Activated CD4-positive, alpha-beta T cell treated with anti-CD3 and anti-CD28 coated beads, Interleukin-2, amount 10 ng/mL, durations not matched to agents 24 days and 14 days (primary cell): ENCODE measurements at regions of chr18 and their contacts with region 1.

Region 1: DNA sequence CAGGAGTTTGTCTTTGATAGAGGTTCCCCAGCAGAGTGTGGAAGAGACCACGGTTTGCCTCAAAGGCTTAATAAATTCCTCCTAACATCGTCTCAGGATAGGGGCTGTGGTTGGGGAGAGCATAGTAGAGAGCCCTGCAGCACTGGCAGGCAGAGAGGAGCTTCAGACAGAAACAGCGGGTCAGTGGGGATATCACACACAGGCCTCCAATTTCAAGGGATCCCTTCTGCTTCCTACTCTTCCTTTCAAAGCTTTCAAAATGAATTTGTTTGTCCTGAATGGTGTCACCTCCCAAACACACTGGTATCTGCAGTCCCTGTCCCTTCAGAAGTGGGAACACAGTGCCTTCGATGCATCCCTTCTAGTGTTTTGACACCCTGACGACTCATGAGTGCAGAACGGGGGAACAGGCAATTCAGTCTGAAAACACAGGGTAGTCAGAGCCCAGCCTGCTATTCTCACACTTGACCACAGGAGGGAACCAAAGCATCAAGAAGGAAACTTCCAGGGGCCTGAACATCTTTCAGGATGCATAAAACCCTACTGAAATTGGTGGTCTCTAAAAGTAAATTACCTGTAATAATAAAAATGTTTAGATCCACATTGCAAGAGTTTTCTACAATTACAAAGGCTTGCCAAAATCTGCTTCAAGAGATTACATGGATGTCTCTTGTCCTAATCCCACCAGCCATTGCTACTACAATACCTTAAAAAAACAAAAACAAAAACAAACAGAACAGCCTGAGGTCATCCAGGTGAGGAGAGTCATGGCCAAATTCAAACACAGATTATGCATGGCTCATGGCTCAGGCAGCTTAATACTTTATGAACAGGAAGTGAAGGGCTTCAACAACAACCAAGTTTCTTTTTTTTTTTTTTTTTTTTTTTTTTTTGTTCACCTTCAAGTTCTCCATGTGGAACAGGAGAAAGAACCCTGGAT is 49.8 kb downstream of the SLC14A2 start:
- DNase-seq: peak; percentile 90
- H3K4me3 Mint-ChIP-seq: peak overlapping the region; percentile 7
- H3K27ac Mint-ChIP-seq: no peak overlapping the region
- H3K4me1 Mint-ChIP-seq: peaks cover 46% of the 10 kb centered on the region
- H3K27me3 Mint-ChIP-seq: peaks cover 23% of the 10 kb centered on the region

Region 2: DNA sequence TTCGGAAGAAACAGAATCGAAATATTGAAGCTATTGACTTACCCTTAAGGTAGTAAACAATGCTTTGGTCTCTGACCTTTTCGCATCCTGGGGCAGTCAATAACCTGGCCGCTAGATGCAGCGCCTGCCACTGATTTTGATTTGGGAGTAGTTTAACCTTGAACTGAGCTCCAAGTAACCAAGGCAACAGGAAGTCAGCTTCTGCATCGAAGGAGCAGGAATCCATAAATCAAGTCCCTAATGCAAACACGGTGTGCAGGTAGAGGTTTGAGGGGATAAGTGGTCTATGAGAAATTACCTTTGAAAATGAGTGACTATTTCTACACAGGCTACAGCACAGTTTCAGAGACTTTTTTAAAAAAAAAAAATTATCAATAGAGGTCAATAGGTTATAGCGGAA is 630.9 kb before region 1 on chr18:
- intact Hi-C with region 1: no loop called
- DNase-seq: no peak
- H3K4me3 Mint-ChIP-seq: no peak overlapping the region
- H3K27ac Mint-ChIP-seq: no peak overlapping the region
- H3K4me1 Mint-ChIP-seq: no peaks in the 10 kb centered on the region
- H3K27me3 Mint-ChIP-seq: no peaks in the 10 kb centered on the region

Region 3: GRCh38 chr18:45571714-45572113 is 93.4 kb before region 1 on chr18:
- intact Hi-C with region 1: no loop called
- DNase-seq: no peak
- H3K4me3 Mint-ChIP-seq: no peak overlapping the region
- H3K27ac Mint-ChIP-seq: no peak overlapping the region
- H3K4me1 Mint-ChIP-seq: no peaks in the 10 kb centered on the region
- H3K27me3 Mint-ChIP-seq: no peaks in the 10 kb centered on the region

Region 4: GRCh38 chr18:45652303-45653080 is 12.6 kb before region 1 on chr18:
- intact Hi-C with region 1: no loop called
- DNase-seq: no peak
- H3K4me3 Mint-ChIP-seq: no peak overlapping the region
- H3K27ac Mint-ChIP-seq: no peak overlapping the region
- H3K4me1 Mint-ChIP-seq: peaks cover 3% of the 10 kb centered on the region
- H3K27me3 Mint-ChIP-seq: peaks cover 19% of the 10 kb centered on the region

Region 5: GRCh38 chr18:45722899-45723298 is 57.8 kb after region 1 on chr18:
- intact Hi-C with region 1: loop called (anchors 2 kb)
- DNase-seq: peak; percentile 91
- H3K4me3 Mint-ChIP-seq: no peak overlapping the region
- H3K27ac Mint-ChIP-seq: no peak overlapping the region
- H3K4me1 Mint-ChIP-seq: no peaks in the 10 kb centered on the region
- H3K27me3 Mint-ChIP-seq: peaks cover 31% of the 10 kb centered on the region

Region 6: DNA sequence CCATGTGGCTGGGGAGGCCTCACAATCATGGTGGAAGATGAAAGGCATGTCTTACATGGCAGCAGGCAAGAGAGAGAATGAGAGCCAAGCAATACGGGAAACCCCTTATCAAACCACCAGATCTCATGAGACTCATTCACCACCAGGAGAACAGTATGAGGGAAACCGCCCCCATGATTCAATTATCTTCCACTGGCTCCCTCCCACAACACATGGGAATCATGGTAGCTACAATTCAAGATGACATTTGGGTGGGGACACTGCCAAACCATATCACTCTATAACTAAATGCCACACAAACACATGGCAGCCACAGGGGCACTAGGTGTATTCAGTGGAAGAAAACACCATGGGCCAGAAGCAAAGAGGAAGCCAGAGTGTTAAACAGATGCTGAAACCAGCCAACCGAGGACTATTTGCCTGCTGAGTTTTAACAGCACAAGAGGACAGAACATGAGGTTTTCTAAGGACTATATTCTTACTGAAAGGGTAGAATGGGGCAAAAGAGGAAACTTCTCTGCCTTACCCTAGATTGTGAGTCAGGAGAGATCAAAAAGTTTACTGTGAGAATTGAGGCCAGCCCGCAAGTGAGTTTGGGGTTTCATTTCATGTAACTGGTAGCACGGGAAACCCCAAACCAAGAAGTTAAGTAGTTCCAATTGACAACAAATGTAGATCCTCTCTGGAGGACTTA is 209.5 kb after region 1 on chr18:
- intact Hi-C with region 1: loop called (anchors 1 kb)
- DNase-seq: peak; percentile 89
- H3K4me3 Mint-ChIP-seq: peak overlapping the region; percentile 58
- H3K27ac Mint-ChIP-seq: peak overlapping the region; percentile 94
- H3K4me1 Mint-ChIP-seq: peaks cover 20% of the 10 kb centered on the region
- H3K27me3 Mint-ChIP-seq: no peaks in the 10 kb centered on the region

Region 7: GRCh38 chr18:45879681-45880655 is 214.9 kb after region 1 on chr18:
- intact Hi-C with region 1: loop called (anchors 1 kb)
- DNase-seq: peak; percentile 92
- H3K4me3 Mint-ChIP-seq: no peak overlapping the region
- H3K27ac Mint-ChIP-seq: no peak overlapping the region
- H3K4me1 Mint-ChIP-seq: peaks cover 10% of the 10 kb centered on the region
- H3K27me3 Mint-ChIP-seq: no peaks in the 10 kb centered on the region

Region 8: GRCh38 chr18:45910405-45911023 is 245.4 kb after region 1 on chr18:
- intact Hi-C with region 1: loop called (anchors 1 kb)
- DNase-seq: peak; percentile 89
- H3K4me3 Mint-ChIP-seq: no peak overlapping the region
- H3K27ac Mint-ChIP-seq: no peak overlapping the region
- H3K4me1 Mint-ChIP-seq: no peaks in the 10 kb centered on the region
- H3K27me3 Mint-ChIP-seq: no peaks in the 10 kb centered on the region

Region 9: DNA sequence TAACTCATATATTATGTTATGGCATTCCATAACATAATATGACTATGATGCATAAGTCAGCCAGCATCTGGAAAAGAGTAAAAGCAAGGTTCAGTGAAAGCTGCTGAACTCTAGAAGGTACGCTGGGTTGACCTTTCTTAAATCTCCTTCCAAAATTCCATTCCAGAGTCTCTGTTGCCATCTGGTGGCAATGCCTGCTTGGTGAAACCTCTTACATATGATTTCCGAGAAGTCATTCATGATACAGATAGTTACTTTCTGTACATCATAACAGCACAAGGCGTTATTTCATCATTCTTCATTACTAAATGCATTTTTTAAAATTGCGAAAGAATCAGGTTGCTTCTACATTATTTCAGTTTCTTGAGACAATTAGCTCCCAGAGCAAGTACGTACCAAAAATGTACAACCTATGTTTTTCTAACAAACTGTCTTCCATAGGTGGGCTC is 309.0 kb after region 1 on chr18:
- intact Hi-C with region 1: loop called (anchors 1 kb)
- DNase-seq: peak; percentile 91
- H3K4me3 Mint-ChIP-seq: no peak overlapping the region
- H3K27ac Mint-ChIP-seq: peak overlapping the region; percentile 25
- H3K4me1 Mint-ChIP-seq: peaks cover 6% of the 10 kb centered on the region
- H3K27me3 Mint-ChIP-seq: no peaks in the 10 kb centered on the region